Right cardiac atrium (tissue), 5 donors: ENCODE measurements at regions of chr7 and their contacts with region 1.

Region 1: DNA sequence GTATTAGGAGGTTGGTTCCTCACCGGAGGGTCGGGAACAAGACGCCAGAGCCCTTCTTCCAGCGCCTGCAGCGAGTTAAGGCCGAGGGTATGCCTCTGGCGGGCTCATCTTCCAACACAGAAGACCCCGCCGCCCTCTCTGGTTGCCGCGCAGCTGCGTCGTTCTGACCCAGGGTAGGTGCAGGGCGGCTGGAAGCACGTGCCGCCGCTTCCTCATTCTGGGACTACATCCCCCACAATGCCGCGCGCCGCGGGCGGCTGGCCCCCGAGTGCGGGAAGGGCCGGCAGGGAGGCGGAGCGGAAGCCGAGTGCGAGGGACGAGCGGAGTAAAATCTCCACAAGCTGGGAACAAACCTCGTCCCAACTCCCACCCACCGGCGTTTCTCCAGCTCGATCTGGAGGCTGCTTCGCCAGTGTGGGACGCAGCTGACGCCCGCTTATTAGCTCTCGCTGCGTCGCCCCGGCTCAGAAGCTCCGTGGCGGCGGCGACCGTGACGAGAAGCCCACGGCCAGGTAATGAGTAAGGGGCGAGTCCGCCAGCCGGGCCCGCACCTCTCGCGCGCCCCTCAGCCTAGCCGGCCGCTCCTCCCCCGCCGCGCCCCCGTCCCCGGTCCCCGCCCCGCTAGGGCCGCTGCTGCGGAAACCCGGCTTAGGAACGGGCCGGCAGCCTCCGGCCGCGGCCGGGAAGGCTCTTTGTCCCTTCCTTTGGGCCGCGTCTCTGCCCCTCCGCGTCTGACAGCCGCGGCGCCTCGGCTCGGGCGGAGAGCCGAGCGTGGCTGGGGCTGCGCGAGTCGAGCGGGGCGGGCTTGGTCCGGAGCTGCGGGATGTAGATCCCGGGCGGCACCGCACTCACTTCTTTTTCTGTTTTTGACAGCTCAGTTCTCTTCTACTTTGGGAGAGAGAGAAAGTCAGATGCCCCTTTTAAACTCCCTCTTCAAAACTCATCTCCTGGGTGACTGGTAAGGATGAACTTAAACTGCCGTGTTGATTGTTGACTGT is at the start of gene CCDC126:
- DNase-seq: peak; percentile 95 to 97 (median 97)
- ATAC-seq: peak; percentile 99
- H3K4me3 ChIP-seq: peak within 1 kb of the TSS; percentile 71
- H3K27ac ChIP-seq: peak within 1 kb of the TSS; percentile 89
- H3K4me1 ChIP-seq: peaks cover 1% of the 10 kb centered on the region
- H3K27me3 ChIP-seq: no peaks in the 10 kb centered on the region
- total RNA-seq, gene CCDC126: 7.8 to 11.3 (median 9.2) TPM

Region 2: DNA sequence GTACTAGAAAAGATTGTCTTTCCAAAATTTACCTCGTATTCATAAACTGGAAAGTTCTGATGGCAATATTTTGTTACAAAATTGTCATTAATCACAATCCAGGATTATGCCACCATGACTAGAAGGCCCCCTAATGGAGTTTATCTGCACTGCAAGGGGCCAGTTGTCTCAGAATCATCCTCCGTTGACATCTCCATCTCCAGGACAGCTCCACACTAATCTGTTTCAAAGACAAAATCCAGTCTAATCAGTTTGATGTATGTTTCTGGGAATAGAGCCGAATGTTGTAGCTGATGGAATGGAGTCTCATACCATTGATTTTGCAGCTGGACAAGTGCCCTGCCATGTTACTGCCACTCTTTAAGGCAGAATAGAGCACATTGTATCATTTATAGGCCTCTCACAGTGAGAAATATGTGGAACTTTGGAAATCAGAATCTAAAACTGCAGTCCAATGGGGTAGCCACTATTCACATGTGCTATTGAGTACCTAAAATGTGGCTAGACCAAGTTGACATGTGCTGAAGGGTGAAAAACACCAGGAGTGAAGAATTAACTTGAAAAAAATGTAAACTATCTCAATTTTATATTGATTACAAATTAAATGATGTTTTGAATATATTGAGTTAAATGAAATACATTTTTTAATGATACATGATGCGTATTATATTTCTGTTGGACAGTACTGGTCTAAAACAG is 736.5 kb before region 1 on chr7:
- intact Hi-C with region 1: no loop called
- DNase-seq: no peak
- ATAC-seq: no peak
- H3K4me3 ChIP-seq: no peak overlapping the region
- H3K27ac ChIP-seq: no peak overlapping the region
- H3K4me1 ChIP-seq: no peaks in the 10 kb centered on the region
- H3K27me3 ChIP-seq: no peaks in the 10 kb centered on the region

Region 3: GRCh38 chr7:23679898-23680413 is 82.6 kb after region 1 on chr7 and contains the start of gene FAM221A:
- intact Hi-C with region 1: loop called in 2 of 4 experiments (anchors 5 to 10 kb)
- DNase-seq: peak; percentile 92 to 96 (median 96)
- ATAC-seq: peak; percentile 100
- H3K4me3 ChIP-seq: peak within 1 kb of the TSS; percentile 95
- H3K27ac ChIP-seq: peak within 1 kb of the TSS; percentile 85
- H3K4me1 ChIP-seq: peaks cover 3% of the 10 kb centered on the region
- H3K27me3 ChIP-seq: no peaks in the 10 kb centered on the region
- total RNA-seq, gene FAM221A: 3.7 to 5.6 (median 4.9) TPM